B cell (primary cell): ENCODE measurements at regions of chr14 and their contacts with region 1.

Region 1: DNA sequence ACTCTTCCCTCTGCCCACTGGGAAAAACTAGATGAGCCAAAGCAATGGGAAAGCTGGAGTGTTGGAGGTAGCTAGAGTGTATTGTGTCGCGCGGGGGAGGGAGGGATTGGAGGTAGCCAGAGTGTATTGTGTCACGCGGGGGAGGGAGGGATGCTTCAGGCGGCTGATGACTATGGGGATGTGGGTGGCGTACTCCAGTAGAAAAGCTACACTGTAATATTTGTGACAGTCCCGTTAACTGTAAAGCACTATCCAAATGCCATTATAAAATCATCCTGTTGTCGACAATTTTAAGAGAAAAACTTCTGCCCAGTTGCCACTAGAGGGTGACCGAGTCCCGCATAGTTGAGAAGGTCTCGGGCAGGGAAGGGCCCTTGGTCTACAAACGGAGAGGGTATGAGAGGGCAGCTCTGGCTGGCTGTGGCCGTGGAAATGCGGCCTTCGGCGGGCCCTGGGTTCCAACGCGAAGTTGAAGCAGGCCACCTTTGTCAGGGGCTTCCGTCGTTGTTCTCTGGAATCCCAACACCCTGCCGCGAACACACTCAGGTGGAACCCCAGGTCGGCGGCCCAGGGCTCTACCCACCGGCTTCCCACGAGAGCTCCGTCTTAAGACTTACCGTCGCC is 15.1 kb upstream of the PLEK2 start:
- DNase-seq: peak; percentile 85
- ATAC-seq: peak; percentile 90
- H3K4me3 ChIP-seq: no peak overlapping the region
- H3K4me3 Mint-ChIP-seq: no peak overlapping the region
- H3K27ac ChIP-seq: no peak overlapping the region
- H3K27ac Mint-ChIP-seq: no peak overlapping the region
- H3K4me1 ChIP-seq: peaks cover 0 to 4% of the 10 kb centered on the region in 2 donors
- H3K4me1 Mint-ChIP-seq: peaks cover 3% of the 10 kb centered on the region
- H3K27me3 ChIP-seq: peaks cover 0 to 25% (median 1%) of the 10 kb centered on the region in 4 experiments
- H3K27me3 Mint-ChIP-seq: peaks cover 20% of the 10 kb centered on the region
- CTCF ChIP-seq: peak; percentile 88

Region 2: DNA sequence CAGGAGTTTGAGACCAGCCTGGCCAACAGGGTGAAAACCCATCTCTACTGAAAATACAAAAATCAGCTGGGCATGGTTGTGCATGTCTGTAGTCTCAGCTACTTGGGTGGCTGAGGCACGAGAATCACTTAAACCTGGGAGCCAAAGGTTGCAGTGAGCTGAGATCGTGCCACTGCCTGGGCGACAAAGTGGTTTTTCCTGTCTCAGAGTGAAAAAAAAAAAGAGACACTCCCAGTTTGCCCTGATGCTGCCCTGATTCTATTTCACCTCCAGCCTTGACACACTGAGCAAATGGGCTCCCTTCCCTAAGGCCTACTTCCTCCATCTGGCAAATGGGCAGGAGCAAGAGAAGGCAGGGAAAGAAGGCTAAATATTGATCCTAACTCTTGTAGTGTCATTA is 13.4 kb after region 1 on chr14:
- CTCF ChIA-PET with region 1: interaction called, 28 read pairs
- POLR2A ChIA-PET with region 1: no interaction called
- intact Hi-C with region 1: no loop called
- DNase-seq: no peak
- ATAC-seq: no peak
- H3K4me3 ChIP-seq: no peak overlapping the region
- H3K4me3 Mint-ChIP-seq: no peak overlapping the region
- H3K27ac ChIP-seq: no peak overlapping the region
- H3K27ac Mint-ChIP-seq: no peak overlapping the region
- H3K4me1 ChIP-seq: no peaks in the 10 kb centered on the region
- H3K4me1 Mint-ChIP-seq: no peaks in the 10 kb centered on the region
- H3K27me3 ChIP-seq: peaks cover 0 to 4% (median 0%) of the 10 kb centered on the region in 4 experiments
- H3K27me3 Mint-ChIP-seq: peaks cover 22% of the 10 kb centered on the region
- CTCF ChIP-seq: no peak

Region 3: GRCh38 chr14:67487937-67488893 is 61.1 kb after region 1 on chr14 and contains the start of gene TMEM229B:
- CTCF ChIA-PET with region 1: interaction called, 26 read pairs
- POLR2A ChIA-PET with region 1: no interaction called
- intact Hi-C with region 1: loop called (anchors 1 kb)
- DNase-seq: peak; percentile 94
- ATAC-seq: peak; percentile 83
- H3K4me3 ChIP-seq: peak within 1 kb of the TSS; percentile 24 to 66 (median 55)
- H3K4me3 Mint-ChIP-seq: peak within 1 kb of the TSS; percentile 84
- H3K27ac ChIP-seq: peak within 1 kb of the TSS; percentile 97 to 98
- H3K27ac Mint-ChIP-seq: peak within 1 kb of the TSS; percentile 96
- H3K4me1 ChIP-seq: peaks cover 70 to 77% of the 10 kb centered on the region in 2 donors
- H3K4me1 Mint-ChIP-seq: peaks cover 83% of the 10 kb centered on the region
- H3K27me3 ChIP-seq: no peaks in the 10 kb centered on the region
- H3K27me3 Mint-ChIP-seq: no peaks in the 10 kb centered on the region
- CTCF ChIP-seq: peak; percentile 25
- total RNA-seq, gene TMEM229B: 4.2 and 6.9 TPM in 2 replicates

Region 4: DNA sequence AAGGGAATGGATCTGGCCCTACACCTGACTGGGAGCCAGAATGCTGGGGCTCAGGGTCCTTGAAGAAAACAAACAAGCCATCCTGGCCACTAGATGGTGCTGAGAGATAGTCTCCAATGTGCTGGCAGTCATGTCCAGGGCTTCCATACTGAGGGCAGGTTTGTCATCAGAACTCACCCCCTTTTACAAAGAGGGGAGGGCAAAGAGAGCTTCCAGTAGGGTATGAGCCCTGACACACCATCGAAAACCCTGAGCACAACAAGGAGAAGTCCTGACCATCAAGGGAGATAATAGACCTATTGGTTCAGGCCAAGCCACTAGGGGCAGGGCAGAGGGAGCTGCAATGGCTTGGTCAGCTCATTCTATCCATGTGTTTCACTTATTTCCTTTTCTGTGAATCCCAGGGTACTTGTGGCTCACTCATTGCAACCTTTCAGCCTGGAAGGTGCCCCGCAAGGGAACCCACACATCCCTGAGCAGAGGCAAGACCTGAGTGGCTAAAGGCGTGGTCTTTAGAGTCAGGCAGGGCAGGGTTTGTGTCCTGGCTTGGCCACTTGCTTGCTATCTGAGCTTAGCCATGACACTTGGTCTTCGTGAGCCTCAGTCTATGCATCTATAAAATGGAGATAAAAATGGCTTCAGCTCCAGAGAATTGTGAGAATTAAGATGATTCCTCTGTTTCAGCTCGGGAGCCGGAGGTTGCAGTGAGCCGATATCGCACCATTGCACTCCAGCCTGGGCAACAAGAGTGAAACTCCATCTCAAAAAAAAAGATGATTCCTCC is 99.8 kb after region 1 on chr14:
- CTCF ChIA-PET with region 1: interaction called, 37 read pairs
- POLR2A ChIA-PET with region 1: no interaction called
- intact Hi-C with region 1: loop called (anchors 2 kb)
- DNase-seq: peak; percentile 56
- ATAC-seq: peak; percentile 78
- H3K4me3 ChIP-seq: no peak overlapping the region
- H3K4me3 Mint-ChIP-seq: no peak overlapping the region
- H3K27ac ChIP-seq: no peak overlapping the region
- H3K27ac Mint-ChIP-seq: peak overlapping the region; percentile 21
- H3K4me1 ChIP-seq: peaks cover 0 to 4% of the 10 kb centered on the region in 2 donors
- H3K4me1 Mint-ChIP-seq: peaks cover 2% of the 10 kb centered on the region
- H3K27me3 ChIP-seq: peaks cover 0 to 42% (median 18%) of the 10 kb centered on the region in 4 experiments
- H3K27me3 Mint-ChIP-seq: peaks cover 56% of the 10 kb centered on the region
- CTCF ChIP-seq: peak; percentile 60

Region 5: DNA sequence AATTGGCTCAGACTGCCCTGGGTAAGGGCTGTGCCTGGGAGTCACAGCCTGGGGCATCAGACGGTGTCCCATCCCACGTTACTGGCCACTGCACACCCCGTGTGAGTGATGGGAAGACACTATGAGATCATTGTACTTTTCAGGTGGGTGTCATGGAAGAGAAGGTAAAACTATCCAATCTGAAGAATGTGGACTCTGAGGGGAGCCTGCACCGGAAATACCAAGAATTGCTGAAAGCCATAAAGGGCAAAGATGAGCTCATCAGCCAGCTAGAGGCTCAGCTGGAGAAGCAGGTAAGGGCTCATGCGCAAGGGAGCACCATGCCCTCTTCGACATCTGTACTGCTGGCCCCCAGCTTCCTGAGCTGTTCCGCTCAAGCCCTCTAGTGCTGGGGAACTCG is 130.0 kb after region 1 on chr14:
- CTCF ChIA-PET with region 1: interaction called, 26 read pairs
- POLR2A ChIA-PET with region 1: no interaction called
- intact Hi-C with region 1: no loop called
- DNase-seq: no peak
- ATAC-seq: no peak
- H3K4me3 ChIP-seq: no peak overlapping the region
- H3K4me3 Mint-ChIP-seq: no peak overlapping the region
- H3K27ac ChIP-seq: no peak overlapping the region
- H3K27ac Mint-ChIP-seq: no peak overlapping the region
- H3K4me1 ChIP-seq: no peaks in the 10 kb centered on the region
- H3K4me1 Mint-ChIP-seq: no peaks in the 10 kb centered on the region
- H3K27me3 ChIP-seq: no peaks in the 10 kb centered on the region
- H3K27me3 Mint-ChIP-seq: peaks cover 8% of the 10 kb centered on the region
- CTCF ChIP-seq: no peak

Region 6: DNA sequence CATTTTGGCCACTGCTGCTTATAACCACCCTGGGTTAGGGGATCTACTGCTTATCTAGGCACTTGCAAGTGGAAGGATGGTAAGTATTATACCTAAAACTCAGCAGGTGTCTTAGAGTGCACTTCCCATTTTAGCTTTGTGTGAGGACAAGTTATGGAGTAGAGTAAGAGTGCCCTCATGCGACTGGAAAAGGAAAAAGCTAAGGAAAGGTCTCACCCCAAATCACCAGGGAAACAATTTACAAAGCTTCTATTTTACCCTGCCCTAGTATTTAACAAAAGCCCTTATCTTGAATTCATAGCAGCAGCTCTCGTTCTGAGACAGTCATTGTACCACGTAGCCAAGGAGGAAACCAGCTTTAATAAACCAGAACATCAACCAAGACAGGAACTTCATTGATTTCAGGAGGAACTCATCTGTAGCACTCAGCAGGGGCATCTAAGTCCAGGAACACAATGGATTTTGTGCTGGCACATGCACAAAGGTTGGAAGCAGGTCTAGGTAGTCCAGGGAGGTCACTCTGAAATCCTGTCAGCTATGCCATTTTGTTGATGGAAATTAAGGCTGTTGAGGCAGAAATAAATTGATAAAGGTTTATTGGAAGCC is 277.5 kb after region 1 on chr14:
- CTCF ChIA-PET with region 1: interaction called, 78 read pairs
- POLR2A ChIA-PET with region 1: no interaction called
- intact Hi-C with region 1: loop called (anchors 1 kb)
- DNase-seq: peak; percentile 77
- ATAC-seq: peak; percentile 78
- H3K4me3 ChIP-seq: no peak overlapping the region
- H3K4me3 Mint-ChIP-seq: no peak overlapping the region
- H3K27ac ChIP-seq: no peak overlapping the region
- H3K27ac Mint-ChIP-seq: no peak overlapping the region
- H3K4me1 ChIP-seq: peaks cover 2% of the 10 kb centered on the region in 2 donors
- H3K4me1 Mint-ChIP-seq: peaks cover 4% of the 10 kb centered on the region
- H3K27me3 ChIP-seq: no peaks in the 10 kb centered on the region
- H3K27me3 Mint-ChIP-seq: peaks cover 8% of the 10 kb centered on the region
- CTCF ChIP-seq: peak; percentile 72

Region 7: DNA sequence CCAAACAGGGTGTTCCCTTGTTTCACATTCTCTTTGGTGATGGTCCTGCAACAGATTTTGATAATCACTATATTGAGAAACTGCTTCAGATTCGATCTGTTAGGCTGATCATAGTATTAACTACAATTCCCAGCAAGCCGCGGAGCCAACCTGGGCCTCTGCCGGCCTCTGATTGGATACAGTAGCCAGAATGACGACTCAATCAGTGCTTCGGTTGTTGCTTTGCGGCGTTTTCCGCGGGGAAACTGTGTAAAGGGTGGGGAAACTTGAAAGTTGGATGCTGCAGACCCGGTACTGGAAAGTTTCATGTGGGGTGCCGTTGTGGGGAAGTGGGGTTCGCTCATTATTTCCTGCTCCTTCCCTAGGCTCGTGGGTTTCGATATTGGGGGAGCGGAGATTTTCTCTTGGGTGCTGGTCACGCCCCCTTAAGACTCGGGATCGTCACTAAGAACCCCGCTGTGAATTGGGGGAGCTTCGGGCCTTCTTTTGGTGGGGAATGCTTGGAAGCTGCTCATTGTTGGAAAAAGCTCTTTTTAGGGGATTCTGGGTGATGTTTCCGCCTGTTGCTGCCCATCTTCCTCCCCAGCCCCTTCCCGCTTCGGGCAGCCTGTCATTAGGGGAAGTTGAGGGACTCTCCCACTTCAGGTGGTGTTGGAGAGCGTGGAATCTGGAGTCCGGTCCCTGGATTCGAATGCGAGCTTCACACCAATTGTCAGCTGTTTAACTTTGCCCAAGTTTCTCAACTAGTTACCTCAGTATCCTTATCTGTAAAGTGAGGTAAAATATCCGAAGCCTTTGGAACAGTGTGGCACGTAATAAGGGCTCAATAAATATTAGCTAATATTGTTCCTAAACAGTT is 392.7 kb after region 1 on chr14 and contains the start of gene RAD51B:
- CTCF ChIA-PET with region 1: no interaction called
- POLR2A ChIA-PET with region 1: no interaction called
- intact Hi-C with region 1: no loop called
- DNase-seq: peak; percentile 91
- ATAC-seq: peak; percentile 44
- H3K4me3 ChIP-seq: peak within 1 kb of the TSS; percentile 84 to 100 (median 91)
- H3K4me3 Mint-ChIP-seq: peak within 1 kb of the TSS; percentile 96
- H3K27ac ChIP-seq: peak within 1 kb of the TSS; percentile 60 to 81
- H3K27ac Mint-ChIP-seq: peak within 1 kb of the TSS; percentile 91
- H3K4me1 ChIP-seq: peaks cover 25 to 31% of the 10 kb centered on the region in 2 donors
- H3K4me1 Mint-ChIP-seq: peaks cover 44% of the 10 kb centered on the region
- H3K27me3 ChIP-seq: no peaks in the 10 kb centered on the region
- H3K27me3 Mint-ChIP-seq: no peaks in the 10 kb centered on the region
- CTCF ChIP-seq: no peak
- total RNA-seq, gene RAD51B: 60.6 and 81.0 TPM in 2 replicates